MCF 10A (cell line): ENCODE measurements at regions of chr7 and their contacts with region 1.

Region 1: DNA sequence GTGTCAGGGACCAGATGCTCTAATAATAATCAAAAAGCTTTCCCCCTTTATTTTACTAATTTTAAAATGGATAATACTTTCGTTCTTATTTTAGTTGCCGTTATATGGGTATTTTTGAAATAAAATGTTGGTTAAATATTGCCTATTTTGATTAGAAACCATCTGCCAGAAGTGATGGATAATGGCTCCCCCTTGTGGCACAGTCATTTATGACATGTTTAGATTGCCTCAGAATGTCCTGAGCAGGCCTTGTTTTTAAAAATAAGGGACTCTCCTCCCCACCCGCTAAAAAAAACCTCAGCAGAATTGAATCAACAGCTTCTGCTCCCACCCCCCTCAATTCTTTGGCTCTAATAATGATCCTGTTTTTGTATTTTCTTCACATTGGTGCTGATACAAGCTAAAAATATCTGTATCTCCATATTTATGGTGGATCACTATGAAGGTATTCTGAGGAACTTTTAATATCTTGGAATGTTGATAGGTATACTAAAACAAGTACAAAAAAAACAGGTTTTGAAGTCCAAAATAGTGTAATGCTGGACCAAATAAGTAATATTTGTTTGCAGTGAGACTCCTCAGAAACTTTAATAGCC is 38.8 kb downstream of the TMEM60 start:
- DNase-seq: peak; percentile 78
- H3K4me3 Mint-ChIP-seq: no peak overlapping the region
- H3K27ac Mint-ChIP-seq: peak overlapping the region; percentile 13
- H3K4me1 Mint-ChIP-seq: peaks cover 6% of the 10 kb centered on the region
- H3K27me3 Mint-ChIP-seq: no peaks in the 10 kb centered on the region
- CTCF ChIP-seq: peak; percentile 78

Region 2: DNA sequence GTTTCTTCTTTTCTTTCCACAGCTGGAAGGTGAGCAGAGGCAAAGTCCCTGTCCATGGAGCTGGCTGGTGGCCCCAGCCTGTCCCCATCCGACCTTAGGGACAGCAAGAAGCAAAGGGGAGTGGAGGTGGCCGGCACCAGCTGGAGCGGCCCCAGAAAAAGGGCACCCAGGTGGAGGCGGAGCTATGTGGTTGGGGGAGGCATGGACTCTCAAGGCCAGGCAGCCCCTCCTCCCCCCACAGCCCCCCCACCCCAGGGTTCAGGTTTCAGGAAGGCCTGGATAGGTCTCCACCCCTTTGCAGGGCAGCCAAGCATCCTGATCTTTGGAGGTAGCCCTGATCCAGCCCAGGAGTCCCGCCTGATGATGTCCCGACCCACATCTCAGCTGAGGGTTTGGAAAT is 1349.9 kb before region 1 on chr7 and contains the start of gene SSC4D:
- CTCF ChIA-PET with region 1: no interaction called
- POLR2A ChIA-PET with region 1: no interaction called
- intact Hi-C with region 1: no loop called
- DNase-seq: no peak
- H3K4me3 Mint-ChIP-seq: no peak within 1 kb of the TSS
- H3K27ac Mint-ChIP-seq: no peak within 1 kb of the TSS
- H3K4me1 Mint-ChIP-seq: no peaks in the 10 kb centered on the region
- H3K27me3 Mint-ChIP-seq: no peaks in the 10 kb centered on the region
- CTCF ChIP-seq: no peak
- total RNA-seq, gene SSC4D: 0.42 and 0.58 TPM in 2 replicates

Region 3: DNA sequence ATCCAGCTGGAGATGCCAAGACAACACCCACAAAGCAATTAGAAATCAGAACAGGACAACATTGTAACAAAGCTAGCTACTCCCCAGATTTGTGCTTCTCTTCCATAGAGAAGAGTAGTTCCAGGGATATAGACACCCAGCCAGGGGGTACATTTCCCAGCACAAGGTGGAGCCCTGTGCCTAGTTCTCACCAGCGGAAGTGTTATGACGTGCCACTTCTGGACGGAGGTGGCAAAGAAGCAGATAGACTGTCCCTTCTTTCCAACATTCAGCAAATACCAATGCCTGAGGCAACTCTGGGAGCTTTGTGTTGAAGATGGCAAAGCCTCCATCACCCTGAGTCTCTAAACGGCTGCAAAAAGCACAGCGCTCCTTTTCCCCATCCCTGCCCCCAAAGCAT is 319.8 kb before region 1 on chr7:
- CTCF ChIA-PET with region 1: interaction called, 10 read pairs
- POLR2A ChIA-PET with region 1: no interaction called
- intact Hi-C with region 1: loop called (anchors 1 kb)
- DNase-seq: peak; percentile 76
- H3K4me3 Mint-ChIP-seq: no peak overlapping the region
- H3K27ac Mint-ChIP-seq: no peak overlapping the region
- H3K4me1 Mint-ChIP-seq: peaks cover 14% of the 10 kb centered on the region
- H3K27me3 Mint-ChIP-seq: no peaks in the 10 kb centered on the region
- CTCF ChIP-seq: peak; percentile 41

Region 4: DNA sequence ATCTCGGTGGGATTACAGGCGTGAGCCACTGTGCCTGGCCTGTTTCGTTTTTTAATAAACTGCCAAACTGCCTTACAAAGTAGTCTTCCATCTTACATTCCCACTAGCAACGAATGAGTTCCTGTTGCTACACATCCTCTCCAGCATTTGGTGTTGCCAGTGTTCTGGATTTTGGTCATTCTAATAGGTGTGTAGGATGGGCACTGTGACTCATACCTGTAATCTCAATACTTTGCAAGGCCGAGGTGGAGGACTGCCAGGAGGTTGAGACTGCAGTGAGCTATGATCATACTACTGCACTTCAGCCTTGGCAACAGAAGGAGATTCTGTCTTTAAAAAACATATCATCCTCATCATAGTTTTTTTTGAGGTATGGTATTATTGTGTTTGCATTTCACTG is 84.5 kb before region 1 on chr7:
- CTCF ChIA-PET with region 1: interaction called, 12 read pairs
- POLR2A ChIA-PET with region 1: interaction called, 3 read pairs
- intact Hi-C with region 1: no loop called
- DNase-seq: peak; percentile 93
- H3K4me3 Mint-ChIP-seq: no peak overlapping the region
- H3K27ac Mint-ChIP-seq: no peak overlapping the region
- H3K4me1 Mint-ChIP-seq: peaks cover 9% of the 10 kb centered on the region
- H3K27me3 Mint-ChIP-seq: no peaks in the 10 kb centered on the region
- CTCF ChIP-seq: no peak

Region 5: DNA sequence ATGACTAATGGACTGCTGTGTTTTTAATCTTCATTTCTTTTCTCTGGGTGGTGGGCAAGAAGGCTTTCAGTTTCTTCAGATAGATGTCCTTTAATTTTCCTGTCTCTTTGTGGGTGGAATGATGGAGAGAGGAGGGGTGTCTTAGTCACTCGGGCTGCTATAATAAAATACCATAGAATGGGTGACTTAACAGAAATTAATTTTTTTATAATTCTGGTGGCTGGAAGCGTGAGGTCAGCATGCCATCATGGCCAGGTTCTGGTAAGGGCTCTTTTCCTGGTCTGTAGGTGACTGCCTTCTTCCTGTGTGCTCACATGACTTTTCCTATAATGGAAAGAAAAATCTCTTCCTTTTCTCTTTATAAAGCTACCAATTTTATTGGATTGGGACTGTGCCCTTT is 56.9 kb before region 1 on chr7:
- CTCF ChIA-PET with region 1: interaction called, 12 read pairs
- POLR2A ChIA-PET with region 1: interaction called, 23 read pairs
- intact Hi-C with region 1: no loop called
- DNase-seq: no peak
- H3K4me3 Mint-ChIP-seq: no peak overlapping the region
- H3K27ac Mint-ChIP-seq: peak overlapping the region; percentile 18
- H3K4me1 Mint-ChIP-seq: peaks cover 26% of the 10 kb centered on the region
- H3K27me3 Mint-ChIP-seq: no peaks in the 10 kb centered on the region
- CTCF ChIP-seq: no peak

Region 6: DNA sequence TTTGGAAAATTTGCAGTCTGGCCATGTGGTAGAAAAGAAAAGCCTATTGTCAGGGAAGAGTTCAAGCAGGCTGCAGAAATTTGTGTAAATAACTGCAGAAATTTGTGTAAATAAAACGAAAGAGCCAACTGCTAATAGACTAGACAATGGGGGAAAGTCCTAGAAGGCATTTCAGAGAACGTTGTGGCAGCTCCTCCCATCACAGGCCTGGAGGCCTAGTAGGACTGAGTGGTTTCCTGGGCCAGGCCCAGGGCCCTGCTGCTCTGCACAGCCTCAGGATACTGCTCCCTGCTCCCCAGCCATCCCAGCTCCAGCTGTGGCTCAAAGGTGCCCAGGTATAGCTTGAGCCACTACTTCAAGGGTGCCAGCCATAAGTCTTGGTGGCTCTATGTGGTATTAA is 12.2 kb before region 1 on chr7:
- CTCF ChIA-PET with region 1: interaction called, 12 read pairs
- POLR2A ChIA-PET with region 1: no interaction called
- intact Hi-C with region 1: no loop called
- DNase-seq: no peak
- H3K4me3 Mint-ChIP-seq: no peak overlapping the region
- H3K27ac Mint-ChIP-seq: no peak overlapping the region
- H3K4me1 Mint-ChIP-seq: no peaks in the 10 kb centered on the region
- H3K27me3 Mint-ChIP-seq: no peaks in the 10 kb centered on the region
- CTCF ChIP-seq: no peak

Region 7: DNA sequence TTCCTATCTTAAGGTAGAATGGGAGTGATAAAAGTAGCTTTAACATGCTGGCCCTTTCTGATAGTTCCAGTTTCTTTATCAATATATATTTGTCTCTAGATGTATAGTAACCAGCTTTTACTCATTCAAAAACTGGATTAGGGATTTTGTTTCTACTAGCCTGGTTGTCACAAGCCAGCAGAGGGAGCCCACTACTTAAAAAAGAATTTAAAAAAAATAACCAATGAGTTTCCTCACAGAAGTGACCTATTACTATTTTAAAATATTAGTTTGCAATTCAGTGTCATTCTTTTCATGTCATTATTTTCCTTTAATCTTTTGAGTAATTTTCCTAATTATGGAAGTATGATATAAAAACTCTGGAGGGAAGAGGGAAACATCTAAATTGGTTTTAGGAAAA is 181.3 kb after region 1 on chr7:
- CTCF ChIA-PET with region 1: interaction called, 6 read pairs
- POLR2A ChIA-PET with region 1: no interaction called
- intact Hi-C with region 1: loop called (anchors 1 kb)
- DNase-seq: peak; percentile 44
- H3K4me3 Mint-ChIP-seq: no peak overlapping the region
- H3K27ac Mint-ChIP-seq: no peak overlapping the region
- H3K4me1 Mint-ChIP-seq: no peaks in the 10 kb centered on the region
- H3K27me3 Mint-ChIP-seq: no peaks in the 10 kb centered on the region
- CTCF ChIP-seq: peak; percentile 66